Naive thymus-derived CD4-positive, alpha-beta T cell (primary cell): ENCODE measurements at regions of chr17 and their contacts with region 1.

Region 1: DNA sequence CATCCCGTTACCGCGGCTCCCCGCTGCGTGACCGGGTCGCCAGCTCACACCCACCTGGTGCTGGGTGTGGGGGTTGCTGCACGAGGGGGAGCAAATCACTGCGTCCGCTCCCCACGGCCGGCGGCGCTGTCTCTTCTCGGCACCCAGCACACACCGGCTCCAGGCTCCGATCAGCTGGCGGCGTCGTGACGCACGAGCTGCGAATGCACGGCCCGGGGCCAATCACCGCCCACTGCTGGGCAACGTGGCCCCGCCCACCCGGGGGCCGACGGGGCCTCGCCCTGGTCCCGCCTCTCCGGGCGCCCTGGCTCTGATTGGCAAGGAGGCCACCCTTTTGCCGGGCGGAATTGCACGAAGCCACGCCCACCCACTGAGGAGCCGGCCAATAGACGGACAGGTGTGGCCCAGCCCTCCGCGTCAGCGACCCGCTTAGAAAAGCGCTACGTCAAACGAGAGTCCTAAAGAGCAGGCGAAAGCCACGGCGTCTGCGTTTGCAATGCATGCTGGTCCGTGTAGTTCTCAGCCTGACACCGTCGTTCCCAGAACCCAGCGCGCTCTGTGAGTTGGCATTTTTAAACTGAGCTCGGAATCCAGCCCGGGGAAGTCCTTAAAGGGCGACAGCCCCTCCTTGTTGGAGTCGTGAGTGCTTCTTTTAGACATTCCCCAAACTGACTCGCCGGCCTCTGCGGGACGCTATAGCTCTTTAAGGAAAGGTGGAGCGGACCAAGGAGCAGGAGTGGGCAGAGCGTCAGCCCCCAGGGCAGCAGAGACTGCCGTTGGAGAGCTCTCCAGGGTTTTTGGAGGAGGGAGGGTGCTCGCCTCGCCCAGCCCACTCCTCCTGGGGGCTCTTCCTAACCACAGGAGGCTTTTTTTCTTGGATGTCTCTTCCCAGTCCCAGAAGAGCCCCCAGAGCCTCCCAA is 6.2 kb upstream of the TLCD2 start:
- DNase-seq: peak; percentile 99 to 100 (median 100)
- ATAC-seq: peak; percentile 92
- H3K4me3 ChIP-seq: peak overlapping the region; percentile 92
- H3K4me3 Mint-ChIP-seq: peak overlapping the region; percentile 87 to 98 (median 94)
- H3K27ac ChIP-seq: peak overlapping the region; percentile 73
- H3K27ac Mint-ChIP-seq: peak overlapping the region; percentile 70 to 99 (median 93)
- H3K4me1 ChIP-seq: peaks cover 17 to 26% of the 10 kb centered on the region in 2 donors
- H3K4me1 Mint-ChIP-seq: peaks cover 19 to 45% (median 24%) of the 10 kb centered on the region in 7 donors
- H3K27me3 ChIP-seq: peaks cover 0 to 7% of the 10 kb centered on the region in 2 donors
- H3K27me3 Mint-ChIP-seq: peaks cover 0 to 9% (median 6%) of the 10 kb centered on the region in 5 donors

Region 2: GRCh38 chr17:1561400-1562175 is 154.7 kb before region 1 on chr17:
- CTCF ChIA-PET with region 1: no interaction called
- POLR2A ChIA-PET with region 1: no interaction called
- intact Hi-C with region 1: loop called (anchors 1 kb)
- DNase-seq: peak in 8 of 9 donors; percentile 28 to 58 (median 36)
- ATAC-seq: peak; percentile 37
- H3K4me3 ChIP-seq: peak overlapping the region; percentile 39
- H3K4me3 Mint-ChIP-seq: peak overlapping the region; percentile 73 to 89 (median 82)
- H3K27ac ChIP-seq: peak overlapping the region; percentile 76
- H3K27ac Mint-ChIP-seq: peak overlapping the region in 8 of 9 donors; percentile 54 to 90 (median 76)
- H3K4me1 ChIP-seq: peaks cover 9 to 12% of the 10 kb centered on the region in 2 donors
- H3K4me1 Mint-ChIP-seq: peaks cover 25 to 54% (median 43%) of the 10 kb centered on the region in 7 donors
- H3K27me3 ChIP-seq: no peaks in the 10 kb centered on the region
- H3K27me3 Mint-ChIP-seq: peaks cover 0 to 13% (median 0%) of the 10 kb centered on the region in 5 donors

Region 3: DNA sequence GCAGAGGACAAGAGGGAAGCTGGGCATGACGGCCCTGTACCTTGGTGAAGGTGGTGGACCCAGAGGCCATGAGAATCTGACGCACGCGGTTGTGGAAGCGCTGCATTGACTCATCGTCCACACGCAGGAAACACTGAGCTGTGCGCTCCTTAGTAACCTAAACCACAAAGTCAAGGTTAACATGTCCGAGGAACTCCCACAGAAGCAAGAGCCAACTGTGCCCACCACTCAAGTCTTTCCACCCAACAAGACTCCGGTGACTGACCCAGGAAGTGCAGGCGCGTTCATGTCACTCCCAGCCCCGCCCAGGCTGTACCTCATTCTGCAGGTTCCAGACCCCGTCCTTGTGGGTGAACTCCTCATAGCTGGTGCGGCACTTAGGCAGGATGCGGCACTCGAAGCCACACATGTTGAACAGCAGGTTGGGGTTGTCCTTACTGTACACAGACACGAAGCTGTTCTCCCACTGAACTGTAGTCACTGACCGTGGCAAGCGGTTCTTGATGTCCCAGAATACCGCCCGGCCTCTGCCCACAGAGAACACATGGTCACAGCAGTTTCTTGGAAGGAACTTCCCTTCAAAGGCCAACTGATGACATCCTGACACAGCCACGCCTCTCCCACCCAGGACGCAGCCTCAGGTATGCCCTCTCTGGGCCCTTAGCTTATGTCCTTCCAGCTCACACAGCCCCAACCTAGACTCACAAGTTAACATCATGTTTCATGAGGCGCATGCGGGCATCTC is 43.1 kb before region 1 on chr17:
- CTCF ChIA-PET with region 1: interaction called, 7 read pairs
- POLR2A ChIA-PET with region 1: no interaction called
- intact Hi-C with region 1: loop called (anchors 5 kb)
- DNase-seq: peak in 1 of 9 donors; percentile 7
- ATAC-seq: peak; percentile 26
- H3K4me3 ChIP-seq: no peak overlapping the region
- H3K4me3 Mint-ChIP-seq: no peak overlapping the region
- H3K27ac ChIP-seq: no peak overlapping the region
- H3K27ac Mint-ChIP-seq: peak overlapping the region in 5 of 9 donors; percentile 6 to 60 (median 43)
- H3K4me1 ChIP-seq: no peaks in the 10 kb centered on the region
- H3K4me1 Mint-ChIP-seq: peaks cover 19 to 45% (median 34%) of the 10 kb centered on the region in 7 donors
- H3K27me3 ChIP-seq: no peaks in the 10 kb centered on the region
- H3K27me3 Mint-ChIP-seq: no peaks in the 10 kb centered on the region

Region 4: DNA sequence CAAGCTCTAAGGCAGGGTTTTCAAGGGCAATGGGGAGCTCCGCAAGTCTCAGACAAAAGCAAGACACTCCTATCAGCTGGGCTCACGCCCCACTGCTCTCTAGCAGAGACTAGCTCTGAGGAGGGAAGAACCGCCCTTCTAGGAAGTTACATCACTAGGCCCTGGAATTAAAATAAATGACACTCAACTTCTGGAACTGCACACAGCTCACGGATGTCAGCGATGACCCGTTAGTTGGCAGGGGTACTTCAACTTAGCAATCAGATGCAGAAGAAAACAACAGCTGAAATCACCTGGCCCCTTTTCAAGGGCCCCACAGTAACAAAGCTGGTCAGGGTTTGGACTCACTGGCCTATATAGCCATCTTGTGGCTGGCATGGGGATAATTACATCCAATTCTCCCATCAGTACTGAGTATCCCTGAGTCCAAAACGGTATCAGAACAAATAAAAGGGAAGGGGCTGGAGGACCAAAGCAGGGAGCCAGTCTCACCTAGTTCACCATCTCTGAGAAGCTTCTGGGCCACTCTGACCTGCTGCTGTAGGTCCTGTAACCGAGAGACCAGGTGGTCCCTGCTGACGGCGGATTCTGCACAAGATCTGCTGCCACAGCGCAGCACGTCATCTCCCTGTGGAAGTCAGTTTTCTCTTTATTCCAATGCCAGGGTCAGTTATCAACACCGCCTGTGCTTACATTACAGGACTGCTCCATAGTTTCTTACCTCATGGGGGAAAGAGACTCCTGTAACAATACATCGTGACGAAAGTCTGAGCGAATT is 67.7 kb after region 1 on chr17:
- CTCF ChIA-PET with region 1: interaction called, 51 read pairs
- POLR2A ChIA-PET with region 1: interaction called, 6 read pairs
- intact Hi-C with region 1: loop called (anchors 1 to 2 kb)
- DNase-seq: peak in 3 of 9 donors; percentile 27 to 30 (median 28)
- ATAC-seq: peak; percentile 85
- H3K4me3 ChIP-seq: no peak overlapping the region
- H3K4me3 Mint-ChIP-seq: peak overlapping the region in 1 of 10 donors; percentile 59
- H3K27ac ChIP-seq: peak overlapping the region; percentile 14
- H3K27ac Mint-ChIP-seq: peak overlapping the region in 7 of 9 donors; percentile 28 to 82 (median 63)
- H3K4me1 ChIP-seq: no peaks in the 10 kb centered on the region
- H3K4me1 Mint-ChIP-seq: peaks cover 0 to 18% (median 14%) of the 10 kb centered on the region in 7 donors
- H3K27me3 ChIP-seq: no peaks in the 10 kb centered on the region
- H3K27me3 Mint-ChIP-seq: no peaks in the 10 kb centered on the region

Region 5: DNA sequence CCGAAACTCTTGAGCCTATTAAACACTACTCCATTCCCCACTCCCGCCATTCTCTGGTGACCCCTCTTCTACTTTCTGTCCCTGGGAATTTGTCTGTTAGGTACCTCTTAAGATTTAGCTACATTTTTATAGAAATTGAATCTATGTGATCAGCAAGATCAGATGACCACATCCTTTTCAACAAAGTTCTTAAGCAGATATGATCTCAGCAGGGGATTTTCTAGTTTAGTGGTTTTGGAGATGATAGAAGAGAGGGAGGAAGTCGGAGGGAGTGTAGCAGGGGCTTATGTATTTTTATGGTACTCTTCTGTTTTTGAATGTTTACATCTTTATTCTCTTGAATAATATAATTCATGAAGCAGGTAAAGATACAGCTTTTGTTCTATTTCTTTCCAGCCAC is 154.3 kb after region 1 on chr17:
- CTCF ChIA-PET with region 1: interaction called, 9 read pairs
- POLR2A ChIA-PET with region 1: interaction called, 8 read pairs
- intact Hi-C with region 1: loop called (anchors 1 kb)
- DNase-seq: peak in 7 of 9 donors; percentile 60 to 86 (median 79)
- ATAC-seq: peak; percentile 81
- H3K4me3 ChIP-seq: no peak overlapping the region
- H3K4me3 Mint-ChIP-seq: peak overlapping the region; percentile 16 to 93 (median 82)
- H3K27ac ChIP-seq: peak overlapping the region; percentile 88
- H3K27ac Mint-ChIP-seq: peak overlapping the region; percentile 90 to 99 (median 96)
- H3K4me1 ChIP-seq: peaks cover 34 to 40% of the 10 kb centered on the region in 2 donors
- H3K4me1 Mint-ChIP-seq: peaks cover 43 to 79% (median 71%) of the 10 kb centered on the region in 7 donors
- H3K27me3 ChIP-seq: no peaks in the 10 kb centered on the region
- H3K27me3 Mint-ChIP-seq: no peaks in the 10 kb centered on the region

Region 6: DNA sequence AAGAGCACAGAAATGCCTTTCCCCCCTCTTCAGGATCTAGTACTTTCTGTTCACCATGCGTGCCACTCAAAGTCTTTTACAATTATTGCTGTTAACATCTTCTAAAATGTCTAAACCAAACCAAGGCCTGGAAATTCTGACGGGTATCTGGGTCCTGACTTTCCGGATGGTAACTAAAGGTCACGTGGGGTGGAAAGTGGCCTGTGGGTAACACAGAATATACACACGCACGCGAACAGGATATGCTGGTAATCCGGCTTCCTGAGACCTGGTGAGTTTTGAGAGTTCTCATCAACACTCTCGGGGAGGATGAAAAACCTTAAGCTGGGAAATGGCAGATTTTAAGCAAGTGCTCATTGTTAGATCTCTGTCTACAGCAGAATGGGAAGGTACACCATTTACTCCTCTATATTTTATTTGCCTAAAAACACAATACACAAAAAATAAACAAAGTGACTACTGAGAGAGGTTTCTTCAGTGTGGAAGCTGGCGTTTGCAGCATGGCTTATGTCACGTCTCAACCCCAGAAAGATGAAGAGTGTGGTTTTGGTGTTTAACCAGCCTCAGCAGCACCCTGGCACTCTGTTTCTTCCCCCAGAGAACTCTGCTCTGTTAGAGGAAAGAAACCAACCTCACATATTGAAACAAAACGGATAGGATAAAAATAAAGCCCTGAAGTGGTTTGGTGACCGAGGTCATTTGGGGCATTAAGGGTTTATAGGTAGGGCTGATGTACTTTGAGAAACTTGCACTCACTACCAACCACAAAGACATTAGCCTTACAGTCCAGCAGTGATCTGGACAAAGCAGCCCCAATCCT is 549.9 kb after region 1 on chr17:
- CTCF ChIA-PET with region 1: no interaction called
- POLR2A ChIA-PET with region 1: no interaction called
- intact Hi-C with region 1: loop called in 1 of 2 experiments (anchors 1 kb)
- DNase-seq: peak; percentile 20 to 96 (median 91)
- ATAC-seq: peak; percentile 92
- H3K4me3 ChIP-seq: peak overlapping the region; percentile 38
- H3K4me3 Mint-ChIP-seq: peak overlapping the region; percentile 69 to 94 (median 82)
- H3K27ac ChIP-seq: peak overlapping the region; percentile 80
- H3K27ac Mint-ChIP-seq: peak overlapping the region; percentile 96 to 100 (median 99)
- H3K4me1 ChIP-seq: peaks cover 65 to 90% of the 10 kb centered on the region in 2 donors
- H3K4me1 Mint-ChIP-seq: peaks cover 38 to 89% (median 83%) of the 10 kb centered on the region in 7 donors
- H3K27me3 ChIP-seq: no peaks in the 10 kb centered on the region
- H3K27me3 Mint-ChIP-seq: no peaks in the 10 kb centered on the region